Activated CD4-positive, alpha-beta memory T cell treated with anti-CD3 and anti-CD28 coated beads, Interleukin-2, amount 10 ng/mL, durations not matched to agents 7 days and 5 days (primary cell): ENCODE measurements at regions of chr2 and their contacts with region 1.

Region 1: DNA sequence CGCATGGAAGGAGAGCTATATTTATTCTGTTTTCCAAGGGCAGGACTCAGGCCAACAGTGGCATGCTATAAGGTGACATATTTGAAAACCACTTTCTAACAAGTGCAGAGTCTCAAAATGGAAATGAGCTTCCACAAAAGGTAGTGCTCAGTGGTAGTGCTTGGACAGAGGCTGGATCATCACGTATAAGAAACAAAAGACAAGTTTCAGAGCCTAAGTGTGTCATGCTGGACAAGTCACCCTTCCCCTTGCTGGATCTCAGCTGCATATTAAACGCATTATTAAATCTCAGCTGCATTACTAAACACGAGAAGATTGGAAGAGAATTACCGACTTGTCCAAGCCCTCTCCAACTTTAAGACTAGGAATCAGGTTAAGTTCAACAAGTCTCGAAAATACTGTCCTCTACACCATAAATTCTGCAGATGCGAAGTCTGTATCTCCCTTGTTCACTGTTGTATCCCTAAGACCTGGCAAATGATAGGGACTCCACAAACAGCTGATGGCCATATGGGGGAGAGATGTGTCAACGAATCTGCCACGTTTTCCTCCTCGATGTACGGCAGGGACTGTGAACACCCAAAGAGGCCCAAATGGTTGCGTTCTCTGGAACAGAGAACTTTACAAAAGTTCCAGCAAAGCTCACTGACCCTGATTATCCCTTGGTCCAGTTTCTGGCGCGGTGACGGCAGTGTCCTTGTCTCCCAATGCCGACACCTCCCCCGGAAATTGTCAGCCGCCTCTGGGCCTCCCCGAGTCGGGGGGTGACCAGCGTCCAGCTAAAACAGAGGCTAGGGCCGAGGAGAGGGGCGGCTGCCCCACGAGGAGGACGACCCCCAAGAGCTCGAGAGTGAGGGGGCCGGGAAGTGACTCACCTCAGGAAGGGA is 611 bp downstream of the NOL10 start:
- DNase-seq: peak; percentile 36
- H3K4me3 Mint-ChIP-seq: no peak overlapping the region
- H3K27ac Mint-ChIP-seq: no peak overlapping the region
- H3K4me1 Mint-ChIP-seq: peaks cover 9% of the 10 kb centered on the region
- H3K27me3 Mint-ChIP-seq: no peaks in the 10 kb centered on the region

Region 2: DNA sequence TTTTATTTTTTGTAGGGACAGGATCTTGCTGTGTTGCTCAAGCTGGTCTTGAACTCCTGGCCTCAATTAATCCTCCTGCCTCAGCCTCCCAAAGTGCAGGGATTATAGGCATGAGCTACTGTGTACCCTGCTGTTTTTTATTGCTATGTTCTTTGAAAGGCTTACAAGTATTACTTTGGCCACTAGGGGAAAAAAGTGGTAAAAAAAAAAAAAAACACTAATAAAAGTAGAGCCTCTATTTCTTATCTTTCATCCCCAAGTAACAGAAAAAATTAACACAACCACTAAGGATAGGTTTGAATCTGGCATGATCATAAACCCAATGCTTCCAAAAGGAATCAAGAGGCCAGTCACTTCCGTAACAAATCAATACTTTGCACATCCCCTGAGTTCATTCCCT is 10.9 kb before region 1 on chr2:
- CTCF ChIA-PET with region 1: interaction called, 13 read pairs
- POLR2A ChIA-PET with region 1: interaction called, 18 read pairs
- DNase-seq: no peak
- H3K4me3 Mint-ChIP-seq: no peak overlapping the region
- H3K27ac Mint-ChIP-seq: no peak overlapping the region
- H3K4me1 Mint-ChIP-seq: peaks cover 25% of the 10 kb centered on the region
- H3K27me3 Mint-ChIP-seq: no peaks in the 10 kb centered on the region

Region 3: GRCh38 chr2:10717613-10718012 is 28.4 kb after region 1 on chr2:
- CTCF ChIA-PET with region 1: no interaction called
- POLR2A ChIA-PET with region 1: no interaction called
- DNase-seq: no peak
- H3K4me3 Mint-ChIP-seq: no peak overlapping the region
- H3K27ac Mint-ChIP-seq: no peak overlapping the region
- H3K4me1 Mint-ChIP-seq: peaks cover 6% of the 10 kb centered on the region
- H3K27me3 Mint-ChIP-seq: peaks cover 49% of the 10 kb centered on the region

Region 4: GRCh38 chr2:10812362-10813162 is 123.4 kb after region 1 on chr2 and contains the start of gene PDIA6:
- CTCF ChIA-PET with region 1: no interaction called
- POLR2A ChIA-PET with region 1: interaction called, 15 read pairs
- DNase-seq: peak; percentile 95
- H3K4me3 Mint-ChIP-seq: peak within 1 kb of the TSS; percentile 88
- H3K27ac Mint-ChIP-seq: peak within 1 kb of the TSS; percentile 89
- H3K4me1 Mint-ChIP-seq: peaks cover 37% of the 10 kb centered on the region
- H3K27me3 Mint-ChIP-seq: peaks cover 15% of the 10 kb centered on the region
- total RNA-seq, gene PDIA6: 161 to 165 TPM